Colonic mucosa (tissue), 4 donors: ENCODE measurements at regions of chr11 and their contacts with region 1.

Region 1: GRCh38 chr11:73236854-73237253 is 18.8 kb downstream of the P2RY2 start:
- DNase-seq: peak; percentile 63
- H3K4me3 ChIP-seq: no peak overlapping the region
- H3K27ac ChIP-seq: no peak overlapping the region
- H3K4me1 ChIP-seq: no peaks in the 10 kb centered on the region
- H3K27me3 ChIP-seq: no peaks in the 10 kb centered on the region
- CTCF ChIP-seq: peak; percentile 56

Region 2: GRCh38 chr11:72391638-72392423 is 845.0 kb before region 1 on chr11:
- intact Hi-C with region 1: no loop called
- DNase-seq: no peak
- H3K4me3 ChIP-seq: no peak overlapping the region
- H3K27ac ChIP-seq: no peak overlapping the region
- H3K4me1 ChIP-seq: no peaks in the 10 kb centered on the region
- H3K27me3 ChIP-seq: no peaks in the 10 kb centered on the region
- CTCF ChIP-seq: no peak

Region 3: GRCh38 chr11:72864702-72865655 is 371.9 kb before region 1 on chr11:
- intact Hi-C with region 1: no loop called
- DNase-seq: no peak
- H3K4me3 ChIP-seq: no peak overlapping the region
- H3K27ac ChIP-seq: no peak overlapping the region
- H3K4me1 ChIP-seq: no peaks in the 10 kb centered on the region
- H3K27me3 ChIP-seq: no peaks in the 10 kb centered on the region
- CTCF ChIP-seq: no peak

Region 4: DNA sequence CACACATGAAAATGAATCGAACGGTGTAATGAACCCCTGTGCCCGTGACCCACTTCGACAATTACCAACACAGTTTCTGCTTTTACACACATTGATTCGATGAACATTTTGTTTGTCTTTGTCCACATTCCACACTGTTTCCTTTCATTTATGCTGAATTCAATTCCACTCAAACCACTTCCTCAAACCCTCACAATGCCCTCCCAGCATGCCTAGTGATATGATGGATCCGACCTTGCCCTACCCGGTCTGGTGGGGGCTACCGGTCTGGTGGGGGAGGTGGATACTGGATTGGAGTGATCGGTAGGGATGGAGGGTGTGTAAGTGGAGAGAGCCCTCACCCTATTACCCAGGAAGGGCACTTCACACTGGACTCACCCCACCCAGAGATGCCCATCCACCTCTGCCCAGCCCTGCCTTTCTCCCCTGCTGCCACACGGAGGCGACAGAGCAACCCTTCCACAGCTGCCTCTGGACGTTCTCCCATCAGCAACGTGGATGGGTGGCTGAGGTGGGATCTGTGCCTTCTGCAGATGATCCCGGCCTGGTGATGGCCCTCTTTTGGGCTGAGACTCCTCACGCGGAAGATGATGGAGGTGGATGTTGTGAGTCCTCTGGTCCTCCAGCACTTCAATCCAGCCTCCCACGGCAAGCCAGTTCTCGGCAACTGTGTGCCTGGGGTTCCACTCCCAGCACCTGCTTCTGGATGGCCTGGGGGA is 51.7 kb before region 1 on chr11:
- intact Hi-C with region 1: loop called (anchors 2 kb)
- DNase-seq: peak; percentile 82
- H3K4me3 ChIP-seq: no peak overlapping the region
- H3K27ac ChIP-seq: no peak overlapping the region
- H3K4me1 ChIP-seq: no peaks in the 10 kb centered on the region
- H3K27me3 ChIP-seq: no peaks in the 10 kb centered on the region
- CTCF ChIP-seq: peak; percentile 80